IMR-90 (cell line): ENCODE measurements at regions of chr13 and their contacts with region 1.

Region 1: GRCh38 chr13:110233181-110233950 is 73.6 kb downstream of the COL4A1 start:
- DNase-seq: peak; percentile 91
- ATAC-seq: no peak
- H3K4me3 ChIP-seq: no peak overlapping the region
- H3K27ac ChIP-seq: peak overlapping the region; percentile 48
- H3K4me1 ChIP-seq: peaks cover 30% of the 10 kb centered on the region
- H3K27me3 ChIP-seq: no peaks in the 10 kb centered on the region
- CTCF ChIP-seq: no peak
- POLR2A ChIP-seq: no peak
- RAD21 ChIP-seq: no peak

Region 2: GRCh38 chr13:110575322-110576069 is 342.1 kb after region 1 on chr13:
- CTCF ChIA-PET with region 1: no interaction called
- POLR2A ChIA-PET with region 1: interaction called, 10 read pairs
- dilution Hi-C with region 1: no loop called
- in situ Hi-C with region 1: no loop called
- intact Hi-C with region 1: no loop called
- DNase-seq: peak; percentile 48
- ATAC-seq: peak; percentile 57
- H3K4me3 ChIP-seq: no peak overlapping the region
- H3K27ac ChIP-seq: no peak overlapping the region
- H3K4me1 ChIP-seq: peaks cover 3% of the 10 kb centered on the region; the same call in 1 of the 2 replicates
- H3K27me3 ChIP-seq: peaks cover 44% of the 10 kb centered on the region
- CTCF ChIP-seq: no peak
- POLR2A ChIP-seq: no peak
- RAD21 ChIP-seq: no peak

Region 3: GRCh38 chr13:110869805-110870706 is 636.7 kb after region 1 on chr13:
- CTCF ChIA-PET with region 1: no interaction called
- POLR2A ChIA-PET with region 1: no interaction called
- dilution Hi-C with region 1: no loop called
- in situ Hi-C with region 1: no loop called
- intact Hi-C with region 1: no loop called
- DNase-seq: peak; percentile 100
- ATAC-seq: peak; percentile 90
- H3K4me3 ChIP-seq: peak overlapping the region; percentile 36
- H3K27ac ChIP-seq: peak overlapping the region; percentile 84
- H3K4me1 ChIP-seq: peaks cover 11% of the 10 kb centered on the region; the same call in 1 of the 2 replicates
- H3K27me3 ChIP-seq: no peaks in the 10 kb centered on the region
- CTCF ChIP-seq: no peak
- POLR2A ChIP-seq: peak; percentile 88
- RAD21 ChIP-seq: peak; percentile 3; the same call in 1 of the 2 replicates